ENCODE measurements at regions of chrX and their contacts with region 1.

Region 1: DNA sequence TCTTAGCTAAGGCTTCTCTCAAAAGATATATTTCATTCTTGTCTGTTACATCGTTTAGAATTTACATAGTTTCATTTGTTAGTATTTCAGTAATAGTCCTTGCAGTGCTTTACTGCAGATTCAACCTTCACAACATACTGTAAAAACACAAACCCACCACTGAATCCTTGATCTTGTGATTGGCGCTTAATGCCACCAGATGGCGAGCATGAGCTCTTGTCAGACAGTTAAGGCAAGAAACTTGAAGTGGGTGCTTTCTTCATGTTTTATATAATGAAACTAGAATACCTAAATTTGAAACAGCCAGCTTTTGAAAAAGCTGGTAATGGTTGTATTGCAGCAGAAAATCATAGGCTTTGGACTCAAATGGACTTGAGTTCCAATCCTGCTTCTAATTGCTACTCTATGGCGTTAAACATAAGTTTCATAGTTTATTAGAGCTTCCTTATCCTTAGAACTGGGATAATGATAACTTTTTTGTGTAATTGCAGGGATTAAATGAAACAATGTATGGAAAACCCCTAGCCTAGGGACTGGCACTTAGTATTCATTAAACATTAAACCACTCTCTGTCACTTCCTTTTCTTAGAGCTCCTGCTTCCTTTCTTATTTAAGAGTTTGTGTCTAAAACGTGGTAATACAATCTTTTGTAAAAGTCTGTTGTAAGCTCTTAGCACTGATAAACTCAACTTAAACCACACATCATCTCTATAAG is 95.1 kb downstream of the USP9X start:
- DNase-seq: peak; percentile 59
- ATAC-seq: peak; percentile 83
- H3K4me3 ChIP-seq: 0 out of 2 replicates have a peak overlapping the region, but pooled peaks have one; percentile 8
- H3K27ac ChIP-seq: peak overlapping the region; percentile 45
- H3K4me1 ChIP-seq: peaks cover 18% of the 10 kb centered on the region
- H3K27me3 ChIP-seq: no peaks in the 10 kb centered on the region
- CTCF ChIP-seq: peak; percentile 75 to 87 (median 81)
- EP300 ChIP-seq: 0 out of 4 replicates have a peak, but pooled peaks of 1 of the 2 experiments have one; percentile 16
- POLR2A ChIP-seq: no peak
- RAD21 ChIP-seq: peak; percentile 84

Region 2: GRCh38 chrX:40580537-40581335 is 599.6 kb before region 1 on chrX and contains the start of gene ATP6AP2:
- CTCF ChIA-PET with region 1: no interaction called
- POLR2A ChIA-PET with region 1: no interaction called
- RAD21 ChIA-PET with region 1: no interaction called
- SMC1A ChIA-PET with region 1: no interaction called
- in situ Hi-C with region 1: no loop called
- intact Hi-C with region 1: no loop called
- DNase-seq: peak; percentile 90
- ATAC-seq: peak; percentile 97
- H3K4me3 ChIP-seq: peak within 1 kb of the TSS; percentile 62
- H3K27ac ChIP-seq: peak within 1 kb of the TSS; percentile 62; the same call in 1 of the 2 replicates
- H3K4me1 ChIP-seq: no peaks in the 10 kb centered on the region
- H3K27me3 ChIP-seq: no peaks in the 10 kb centered on the region
- CTCF ChIP-seq: no peak
- EP300 ChIP-seq: no peak
- POLR2A ChIP-seq: peak; percentile 96
- RAD21 ChIP-seq: no peak
- polyA plus RNA-seq, gene ATP6AP2: 45.5 to 59.5 TPM

Region 3: DNA sequence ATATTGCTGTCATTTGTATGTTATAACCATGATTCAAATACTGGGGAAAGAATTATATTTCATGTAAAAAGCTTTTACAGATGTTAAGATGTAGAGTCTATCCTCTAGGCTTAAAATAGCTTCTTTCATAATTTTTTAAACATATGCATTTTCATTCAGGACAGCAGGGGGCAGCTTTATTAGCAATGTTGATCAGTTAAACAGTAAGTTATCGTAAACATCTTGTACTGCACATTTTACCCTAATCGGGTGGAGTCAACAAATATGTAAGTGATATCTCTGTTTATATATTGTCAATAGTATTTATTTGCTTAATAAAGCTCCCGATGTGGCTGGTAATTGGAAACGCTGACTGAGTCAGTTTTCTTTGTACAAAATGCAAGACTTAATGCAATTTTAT is 302.5 kb before region 1 on chrX:
- CTCF ChIA-PET with region 1: interaction called, 18 read pairs
- POLR2A ChIA-PET with region 1: no interaction called
- RAD21 ChIA-PET with region 1: interaction called, 6 read pairs
- SMC1A ChIA-PET with region 1: interaction called, 4 read pairs
- in situ Hi-C with region 1: no loop called
- intact Hi-C with region 1: no loop called
- DNase-seq: no peak
- ATAC-seq: peak; percentile 67
- H3K4me3 ChIP-seq: no peak overlapping the region
- H3K27ac ChIP-seq: no peak overlapping the region
- H3K4me1 ChIP-seq: no peaks in the 10 kb centered on the region
- H3K27me3 ChIP-seq: no peaks in the 10 kb centered on the region
- CTCF ChIP-seq: peak; percentile 24 to 44 (median 29); a peak in 4 of 6 replicates
- EP300 ChIP-seq: no peak
- POLR2A ChIP-seq: no peak
- RAD21 ChIP-seq: peak; percentile 37; the same call in 1 of the 2 replicates

Region 4: DNA sequence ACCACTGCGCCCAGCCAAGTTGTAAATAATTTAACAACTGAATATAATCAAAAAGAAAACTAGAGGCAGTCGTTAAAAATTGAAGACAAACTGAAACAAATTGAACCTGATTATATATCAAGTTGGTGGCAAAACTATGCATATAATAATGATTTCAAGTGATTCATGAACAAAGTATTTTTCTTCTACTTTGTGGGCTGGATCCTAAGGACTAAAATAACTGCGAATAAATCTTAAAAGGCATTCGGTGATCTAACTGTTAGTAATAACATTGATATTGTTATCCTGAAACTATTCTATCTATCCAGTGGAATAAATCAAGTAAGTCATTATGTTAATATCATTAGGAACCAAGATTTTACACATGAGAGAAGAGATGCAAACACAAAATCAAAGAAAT is 116.3 kb before region 1 on chrX:
- CTCF ChIA-PET with region 1: no interaction called
- POLR2A ChIA-PET with region 1: no interaction called
- RAD21 ChIA-PET with region 1: no interaction called
- SMC1A ChIA-PET with region 1: no interaction called
- in situ Hi-C with region 1: no loop called
- intact Hi-C with region 1: no loop called
- DNase-seq: no peak
- ATAC-seq: no peak
- H3K4me3 ChIP-seq: no peak overlapping the region
- H3K27ac ChIP-seq: no peak overlapping the region
- H3K4me1 ChIP-seq: no peaks in the 10 kb centered on the region
- H3K27me3 ChIP-seq: no peaks in the 10 kb centered on the region; a peak in 1 of 4 replicates
- CTCF ChIP-seq: no peak
- EP300 ChIP-seq: no peak
- POLR2A ChIP-seq: no peak
- RAD21 ChIP-seq: no peak

Region 5: GRCh38 chrX:41164449-41164848 is 15.9 kb before region 1 on chrX:
- CTCF ChIA-PET with region 1: interaction called, 34 read pairs
- POLR2A ChIA-PET with region 1: no interaction called
- RAD21 ChIA-PET with region 1: interaction called, 3 read pairs
- SMC1A ChIA-PET with region 1: interaction called, 25 read pairs
- in situ Hi-C with region 1: no loop called
- intact Hi-C with region 1: no loop called
- DNase-seq: no peak
- ATAC-seq: no peak
- H3K4me3 ChIP-seq: no peak overlapping the region
- H3K27ac ChIP-seq: no peak overlapping the region
- H3K4me1 ChIP-seq: no peaks in the 10 kb centered on the region
- H3K27me3 ChIP-seq: no peaks in the 10 kb centered on the region
- CTCF ChIP-seq: no peak
- EP300 ChIP-seq: no peak
- POLR2A ChIP-seq: no peak
- RAD21 ChIP-seq: no peak

Region 6: GRCh38 chrX:41236629-41237028 is 56.3 kb after region 1 on chrX:
- CTCF ChIA-PET with region 1: interaction called, 60 read pairs
- POLR2A ChIA-PET with region 1: interaction called, 7 read pairs
- RAD21 ChIA-PET with region 1: interaction called, 37 read pairs
- SMC1A ChIA-PET with region 1: interaction called, 50 read pairs
- in situ Hi-C with region 1: no loop called
- intact Hi-C with region 1: loop called (anchors 5 kb)
- DNase-seq: peak; percentile 64
- ATAC-seq: peak; percentile 91
- H3K4me3 ChIP-seq: no peak overlapping the region
- H3K27ac ChIP-seq: peak overlapping the region; percentile 35; the same call in 1 of the 2 replicates
- H3K4me1 ChIP-seq: peaks cover 19% of the 10 kb centered on the region; the same call in 1 of the 2 replicates
- H3K27me3 ChIP-seq: no peaks in the 10 kb centered on the region
- CTCF ChIP-seq: no peak
- EP300 ChIP-seq: peak; percentile 84 to 85
- POLR2A ChIP-seq: no peak
- RAD21 ChIP-seq: no peak

Region 7: GRCh38 chrX:41259516-41259915 is 79.2 kb after region 1 on chrX:
- CTCF ChIA-PET with region 1: interaction called, 227 read pairs
- POLR2A ChIA-PET with region 1: interaction called, 5 read pairs
- RAD21 ChIA-PET with region 1: interaction called, 116 read pairs
- SMC1A ChIA-PET with region 1: interaction called, 163 read pairs
- in situ Hi-C with region 1: loop called (anchors 5 kb)
- intact Hi-C with region 1: no loop called
- DNase-seq: no peak
- ATAC-seq: no peak
- H3K4me3 ChIP-seq: no peak overlapping the region
- H3K27ac ChIP-seq: no peak overlapping the region
- H3K4me1 ChIP-seq: peaks cover 6% of the 10 kb centered on the region; the same call in 1 of the 2 replicates
- H3K27me3 ChIP-seq: no peaks in the 10 kb centered on the region
- CTCF ChIP-seq: no peak
- EP300 ChIP-seq: no peak
- POLR2A ChIP-seq: no peak
- RAD21 ChIP-seq: no peak

Region 8: DNA sequence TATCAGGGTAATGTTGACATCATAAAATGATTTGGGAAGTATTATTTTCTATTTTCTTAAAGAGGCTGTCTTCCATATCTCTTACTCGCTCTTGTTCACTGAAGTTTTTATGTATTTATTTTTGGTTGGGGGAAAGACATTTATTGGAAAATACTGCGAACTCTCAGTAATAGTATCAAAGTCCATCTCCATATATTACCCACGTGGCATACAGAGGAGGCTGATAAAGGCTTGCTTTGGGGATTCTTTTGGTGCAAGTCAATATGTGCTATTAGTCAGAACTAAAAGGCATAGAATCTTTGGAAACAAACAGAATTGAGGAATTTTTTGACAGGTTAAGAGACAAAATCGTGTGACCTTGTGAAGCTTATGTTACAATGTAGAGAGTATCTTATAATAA is 368.1 kb after region 1 on chrX:
- CTCF ChIA-PET with region 1: no interaction called
- POLR2A ChIA-PET with region 1: no interaction called
- RAD21 ChIA-PET with region 1: no interaction called
- SMC1A ChIA-PET with region 1: no interaction called
- in situ Hi-C with region 1: no loop called
- intact Hi-C with region 1: no loop called
- DNase-seq: no peak
- ATAC-seq: no peak
- H3K4me3 ChIP-seq: no peak overlapping the region
- H3K27ac ChIP-seq: no peak overlapping the region
- H3K4me1 ChIP-seq: no peaks in the 10 kb centered on the region
- H3K27me3 ChIP-seq: no peaks in the 10 kb centered on the region
- CTCF ChIP-seq: no peak
- EP300 ChIP-seq: no peak
- POLR2A ChIP-seq: no peak
- RAD21 ChIP-seq: no peak

Region 9: GRCh38 chrX:41759817-41760216 is 579.5 kb after region 1 on chrX:
- CTCF ChIA-PET with region 1: interaction called, 16 read pairs
- POLR2A ChIA-PET with region 1: no interaction called
- RAD21 ChIA-PET with region 1: interaction called, 7 read pairs
- SMC1A ChIA-PET with region 1: no interaction called
- in situ Hi-C with region 1: no loop called
- intact Hi-C with region 1: no loop called
- DNase-seq: no peak
- ATAC-seq: peak; percentile 72
- H3K4me3 ChIP-seq: no peak overlapping the region
- H3K27ac ChIP-seq: no peak overlapping the region
- H3K4me1 ChIP-seq: no peaks in the 10 kb centered on the region
- H3K27me3 ChIP-seq: no peaks in the 10 kb centered on the region
- CTCF ChIP-seq: peak; percentile 59 to 67 (median 62)
- EP300 ChIP-seq: no peak
- POLR2A ChIP-seq: no peak
- RAD21 ChIP-seq: peak; percentile 93

Measured in GM12878 (cell line).